Gastrocnemius medialis (tissue), 4 donors: ENCODE measurements at regions of chrX and their contacts with region 1.

Region 1: GRCh38 chrX:103686199-103687072 is at the start of gene MORF4L2:
- DNase-seq: peak; percentile 93 to 96
- ATAC-seq: peak; percentile 87 to 91
- H3K4me3 ChIP-seq: peak within 1 kb of the TSS; percentile 73 to 74 (median 74)
- H3K27ac ChIP-seq: peak within 1 kb of the TSS; percentile 94 to 99 (median 97)
- H3K4me1 ChIP-seq: peaks cover 5 to 9% of the 10 kb centered on the region in 2 donors
- H3K27me3 ChIP-seq: no peaks in the 10 kb centered on the region
- CTCF ChIP-seq: no peak
- POLR2A ChIP-seq: peak; percentile 78 to 90
- total RNA-seq, gene MORF4L2: 190 to 317 (median 213) TPM

Region 2: GRCh38 chrX:103533511-103534216 is 152.8 kb before region 1 on chrX:
- in situ Hi-C with region 1: no loop called
- intact Hi-C with region 1: loop called (anchors 5 kb)
- DNase-seq: peak; percentile 15 to 60
- ATAC-seq: peak; percentile 68 to 77
- H3K4me3 ChIP-seq: peak overlapping the region; percentile 40 to 57 (median 48)
- H3K27ac ChIP-seq: peak overlapping the region in 1 of 4 donors; percentile 28
- H3K4me1 ChIP-seq: no peaks in the 10 kb centered on the region
- H3K27me3 ChIP-seq: no peaks in the 10 kb centered on the region
- CTCF ChIP-seq: peak; percentile 54 to 79 (median 67)
- POLR2A ChIP-seq: no peak

Region 3: GRCh38 chrX:103607364-103608305 is 78.8 kb before region 1 on chrX and contains the start of gene TCEAL3:
- in situ Hi-C with region 1: no loop called
- intact Hi-C with region 1: loop called (anchors 5 kb)
- DNase-seq: peak in 1 of 2 donors; percentile 25
- ATAC-seq: peak; percentile 75 to 83
- H3K4me3 ChIP-seq: peak within 1 kb of the TSS; percentile 61 to 67 (median 62)
- H3K27ac ChIP-seq: peak within 1 kb of the TSS; percentile 75 to 82 (median 78)
- H3K4me1 ChIP-seq: no peaks in the 10 kb centered on the region
- H3K27me3 ChIP-seq: peaks cover 0 to 5% (median 0%) of the 10 kb centered on the region in 3 donors
- CTCF ChIP-seq: no peak
- POLR2A ChIP-seq: peak; percentile 26 to 35
- total RNA-seq, gene TCEAL3: 5.0 to 9.2 (median 7.1) TPM

Region 4: GRCh38 chrX:103817502-103817901 is 131.1 kb after region 1 on chrX:
- in situ Hi-C with region 1: loop called in 1 of 4 experiments (anchors 10 kb)
- intact Hi-C with region 1: loop called (anchors 2 kb)
- DNase-seq: no peak
- ATAC-seq: no peak
- H3K4me3 ChIP-seq: no peak overlapping the region
- H3K27ac ChIP-seq: no peak overlapping the region
- H3K4me1 ChIP-seq: no peaks in the 10 kb centered on the region
- H3K27me3 ChIP-seq: no peaks in the 10 kb centered on the region
- CTCF ChIP-seq: peak; percentile 31 to 80 (median 64)
- POLR2A ChIP-seq: no peak

Region 5: GRCh38 chrX:103845165-103845653 is 158.8 kb after region 1 on chrX:
- in situ Hi-C with region 1: no loop called
- intact Hi-C with region 1: no loop called
- DNase-seq: peak in 1 of 2 donors; percentile 30
- ATAC-seq: peak; percentile 58 to 74
- H3K4me3 ChIP-seq: no peak overlapping the region
- H3K27ac ChIP-seq: no peak overlapping the region
- H3K4me1 ChIP-seq: no peaks in the 10 kb centered on the region
- H3K27me3 ChIP-seq: no peaks in the 10 kb centered on the region
- CTCF ChIP-seq: peak in 3 of 5 experiments; percentile 24 to 67 (median 43)
- POLR2A ChIP-seq: no peak

Region 6: DNA sequence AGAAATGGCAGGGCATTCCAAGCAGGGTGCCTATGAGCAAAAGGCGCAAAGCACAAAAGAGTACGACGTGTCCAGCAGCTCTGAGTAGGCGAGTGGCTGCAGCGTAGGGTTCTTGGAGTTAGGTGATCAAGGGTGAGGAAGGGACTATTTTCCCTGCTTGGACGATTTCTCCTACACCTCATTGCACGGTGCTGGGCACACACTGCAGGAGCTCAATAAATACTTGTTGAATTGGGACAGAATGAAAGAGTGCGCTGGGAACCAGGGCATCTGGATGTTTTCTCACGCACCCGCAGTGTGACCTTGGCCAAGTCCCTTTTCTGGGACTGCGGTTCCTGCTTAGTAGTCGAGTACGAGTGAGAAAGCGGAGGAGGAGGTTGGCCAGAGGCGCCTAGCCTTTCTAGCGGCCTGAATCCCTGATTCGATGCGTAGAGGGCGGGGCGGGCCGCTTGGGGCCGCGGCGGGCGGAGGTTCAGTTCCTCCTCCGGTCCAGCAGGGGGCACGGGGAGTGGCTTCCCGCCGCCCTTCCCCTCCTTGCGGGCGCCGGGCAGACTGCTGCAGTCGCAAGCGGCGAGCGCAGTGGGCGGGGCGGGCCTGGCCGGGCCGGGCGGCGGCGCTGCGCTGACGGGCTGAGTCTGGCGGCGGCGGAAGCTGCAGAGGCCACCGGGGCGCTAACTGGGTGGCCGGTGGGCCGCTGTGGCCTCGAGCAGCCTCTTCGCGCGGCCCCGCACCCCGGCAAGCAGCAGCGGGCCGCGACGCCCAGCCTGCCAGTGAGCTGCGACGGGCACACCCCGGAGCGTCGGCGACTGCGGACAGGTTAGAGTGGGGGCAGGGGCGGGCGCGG is 479.7 kb after region 1 on chrX and contains the start of gene FAM199X:
- in situ Hi-C with region 1: loop called in 2 of 4 experiments (anchors 25 kb)
- intact Hi-C with region 1: loop called (anchors 5 kb)
- DNase-seq: peak; percentile 68 to 83
- ATAC-seq: peak; percentile 89
- H3K4me3 ChIP-seq: peak within 1 kb of the TSS; percentile 66 to 78 (median 72)
- H3K27ac ChIP-seq: peak within 1 kb of the TSS; percentile 70 to 89 (median 86)
- H3K4me1 ChIP-seq: peaks cover 0 to 12% of the 10 kb centered on the region in 2 donors
- H3K27me3 ChIP-seq: no peaks in the 10 kb centered on the region
- CTCF ChIP-seq: peak; percentile 72 to 84 (median 79)
- POLR2A ChIP-seq: peak; percentile 78 to 81
- total RNA-seq, gene FAM199X: 13.4 to 23.4 (median 17.8) TPM